Motor neuron (in vitro differentiated cells): ENCODE measurements at regions of chr2 and their contacts with region 1.

Region 1: DNA sequence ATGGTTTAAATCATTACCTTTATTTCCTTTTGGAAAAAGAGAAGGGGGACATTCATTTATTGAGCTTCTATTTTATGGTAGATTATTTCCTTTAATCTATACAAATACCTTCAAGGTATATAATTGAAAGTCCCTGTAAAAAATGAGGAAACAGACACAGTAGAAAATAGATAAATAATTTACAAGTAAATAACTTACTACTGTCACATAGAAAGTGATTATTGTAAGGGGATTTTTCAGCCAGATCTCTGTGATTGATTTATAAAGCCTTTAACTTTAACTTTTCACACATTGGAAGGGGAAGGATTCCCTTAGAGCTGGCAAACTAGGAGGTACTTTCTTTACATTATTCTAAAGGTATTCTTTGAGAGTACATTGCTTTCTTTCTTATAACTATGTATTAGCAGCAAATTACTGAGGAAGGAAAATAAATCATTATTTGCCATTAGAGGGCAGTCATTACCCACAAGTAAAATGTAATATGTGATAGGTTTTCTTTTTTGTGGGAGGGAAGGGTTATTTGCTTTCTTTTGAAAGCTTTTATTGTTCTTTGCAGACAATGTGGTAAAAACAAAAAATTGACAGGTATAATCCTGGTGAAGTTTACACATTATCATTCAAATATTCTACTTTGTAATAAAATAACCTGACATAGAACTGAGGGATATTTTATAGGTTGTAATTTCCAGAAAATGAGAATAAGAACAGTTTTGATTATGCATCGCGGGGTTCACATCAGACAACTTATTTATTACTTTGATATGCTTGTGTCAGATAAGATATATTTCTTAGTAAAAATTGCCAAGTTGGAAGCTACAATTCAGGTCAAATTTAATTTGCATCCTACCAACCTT is 24.8 kb upstream of the RPE start:
- ATAC-seq: no peak
- H3K4me3 ChIP-seq: no peak overlapping the region
- H3K27ac ChIP-seq: no peak overlapping the region
- H3K4me1 ChIP-seq: no peaks in the 10 kb centered on the region

Region 2: DNA sequence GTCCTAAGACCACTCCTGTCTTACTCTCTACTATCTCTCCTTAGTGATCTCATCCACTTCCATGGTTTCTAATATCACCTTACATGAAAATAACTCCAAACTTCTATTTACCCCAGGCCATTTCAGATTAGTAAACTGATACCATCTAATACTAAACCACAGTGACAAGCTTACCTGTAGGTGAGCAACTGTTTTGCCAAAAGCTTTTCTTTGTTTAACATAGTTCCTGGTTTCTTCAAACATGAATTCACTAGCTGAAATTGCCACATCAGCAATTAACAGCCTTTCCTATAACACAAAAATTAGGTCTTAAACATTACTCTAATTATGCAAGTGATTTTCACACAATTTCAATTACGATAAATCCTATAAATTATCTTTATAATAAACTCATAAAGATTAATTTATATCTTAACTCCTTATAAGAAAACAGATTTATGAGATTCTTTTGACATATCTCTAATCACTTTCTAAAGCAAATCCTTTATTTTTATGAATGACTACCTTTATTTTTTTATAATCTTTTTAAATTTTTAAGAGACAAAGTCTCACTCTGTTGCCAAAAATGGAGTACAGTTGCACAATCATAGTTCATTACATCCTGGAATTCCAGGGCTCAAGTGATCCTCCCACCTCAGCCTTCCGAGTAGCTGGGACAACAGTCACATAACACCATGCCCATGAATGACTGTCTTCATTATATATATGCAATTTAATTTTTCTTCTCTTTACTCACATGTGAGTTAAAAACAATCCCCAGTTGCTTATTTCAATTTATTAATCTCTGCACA is 225.7 kb after region 1 on chr2:
- in situ Hi-C with region 1: loop called in 5 of 9 experiments (anchors 10 to 25 kb)
- ATAC-seq: no peak
- H3K4me3 ChIP-seq: no peak overlapping the region
- H3K27ac ChIP-seq: no peak overlapping the region
- H3K4me1 ChIP-seq: no peaks in the 10 kb centered on the region